ENCODE measurements at regions of chr2 and their contacts with region 1.

Region 1: DNA sequence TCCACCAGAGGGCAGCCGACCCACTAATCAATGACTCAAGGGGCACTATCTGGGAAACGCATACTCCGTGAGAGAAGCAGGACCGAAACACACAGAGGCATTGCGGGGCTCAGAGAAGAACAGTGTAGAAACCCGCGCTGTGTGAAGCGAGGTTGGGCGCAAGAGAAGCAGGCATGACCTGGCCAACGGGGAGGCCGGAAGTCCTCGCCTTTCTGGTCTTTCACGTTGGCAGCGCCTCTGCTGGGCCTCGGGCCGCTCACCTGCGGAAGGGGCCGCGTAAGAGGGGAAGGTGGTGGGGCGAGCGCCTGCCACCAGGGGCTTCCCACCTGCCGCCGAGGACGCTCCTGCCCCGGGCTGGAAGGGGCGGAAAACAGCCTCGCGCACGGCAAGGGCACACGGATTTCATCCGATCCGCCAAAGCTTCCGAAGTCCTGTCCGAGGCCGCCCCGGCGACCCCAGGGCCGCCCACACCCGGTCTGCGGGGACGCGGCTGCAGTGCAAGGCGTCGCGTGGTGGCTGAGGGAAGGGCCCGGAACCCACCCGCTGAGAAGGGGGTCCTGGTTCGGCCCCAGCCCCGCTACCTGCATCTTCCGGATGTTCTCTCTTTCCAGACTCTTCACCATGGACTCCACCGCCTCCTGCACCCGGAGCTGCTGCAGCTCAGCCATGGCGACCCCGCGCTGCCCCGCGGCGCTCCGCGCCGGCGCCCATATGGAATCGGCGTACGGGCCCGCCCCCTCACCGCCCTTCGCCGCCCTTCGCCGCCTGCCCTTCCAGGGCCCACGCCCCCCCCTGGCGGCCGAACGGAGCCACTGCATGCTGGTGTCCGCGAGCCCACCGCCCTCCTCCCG is at the start of gene FAM136A:
- DNase-seq: peak; percentile 78 to 89
- ATAC-seq: peak; percentile 86 to 94
- H3K4me3 ChIP-seq: peak within 1 kb of the TSS; percentile 95
- H3K27ac ChIP-seq: peak within 1 kb of the TSS; percentile 95 to 96
- H3K4me1 ChIP-seq: peaks cover 6% of the 10 kb centered on the region
- CTCF ChIP-seq: peak; percentile 75
- EP300 ChIP-seq: no peak
- POLR2A ChIP-seq: peak; percentile 96
- RAD21 ChIP-seq: peak; percentile 47 to 55; a peak in 4 of 5 replicates
- polyA plus RNA-seq, gene FAM136A: 88.5 and 117 TPM in 2 replicates

Region 2: DNA sequence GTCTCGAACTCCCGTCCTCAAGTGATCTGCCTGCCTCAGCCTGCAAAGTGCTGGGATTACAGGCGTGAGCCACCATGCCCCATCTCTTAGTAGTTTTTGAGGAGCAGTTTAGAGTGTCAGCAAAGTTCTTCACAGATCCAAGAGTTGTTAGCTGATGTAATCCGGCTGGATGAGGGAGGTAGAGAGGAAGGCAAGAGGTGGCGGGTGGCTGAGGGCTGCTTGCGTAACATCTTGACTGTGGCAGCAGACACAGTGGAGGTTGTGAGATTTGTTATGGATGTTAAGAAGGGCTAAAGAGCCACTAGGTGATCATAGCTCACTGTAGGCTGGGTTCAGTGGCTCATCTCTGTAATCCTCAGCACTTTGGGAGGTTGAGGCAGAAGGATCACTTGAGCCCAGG is 19.8 kb after region 1 on chr2:
- CTCF ChIA-PET with region 1: interaction called, 155 read pairs
- POLR2A ChIA-PET with region 1: no interaction called
- DNase-seq: no peak
- ATAC-seq: no peak
- H3K4me3 ChIP-seq: no peak overlapping the region
- H3K27ac ChIP-seq: no peak overlapping the region
- H3K4me1 ChIP-seq: no peaks in the 10 kb centered on the region
- CTCF ChIP-seq: no peak
- EP300 ChIP-seq: no peak
- POLR2A ChIP-seq: no peak
- RAD21 ChIP-seq: no peak

Region 3: DNA sequence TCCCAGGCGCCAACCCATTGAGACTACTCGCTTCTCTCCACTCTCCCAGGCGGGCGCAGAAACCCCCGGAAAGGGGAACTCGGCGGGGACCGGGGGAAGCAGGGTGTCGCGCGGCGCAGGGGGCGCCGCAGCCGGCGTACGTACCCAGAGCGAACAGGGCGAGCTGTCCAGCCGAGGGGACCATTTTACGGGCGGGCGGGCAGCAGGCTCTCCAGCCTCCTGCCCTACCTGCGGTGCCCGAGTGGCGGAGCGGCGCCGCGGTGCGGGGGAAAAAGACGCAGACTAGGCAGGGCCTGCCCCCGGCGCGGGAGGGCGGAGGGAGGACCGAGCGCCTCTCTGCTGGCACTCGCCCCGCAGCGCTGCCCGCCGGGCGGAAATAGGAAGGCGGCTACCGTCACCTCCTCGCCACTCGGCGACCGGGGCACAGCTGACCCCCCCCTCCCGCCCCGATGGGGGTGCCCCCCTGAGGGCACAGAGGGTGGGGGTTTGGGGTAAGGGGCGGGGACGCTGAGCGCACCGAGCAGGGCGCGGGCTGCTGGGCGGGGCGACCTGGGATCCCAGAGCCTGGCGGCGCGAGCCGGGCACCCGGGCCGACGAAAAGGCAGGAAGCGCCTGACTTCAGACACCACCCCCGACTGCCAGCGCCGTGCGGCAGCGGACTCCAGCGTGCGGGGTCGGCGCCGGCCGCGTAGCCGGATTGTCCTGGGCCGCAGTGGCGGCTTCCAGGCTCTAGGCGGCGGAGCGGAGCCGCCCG is 252.2 kb after region 1 on chr2 and contains the start of gene TGFA:
- CTCF ChIA-PET with region 1: interaction called, 20 read pairs
- POLR2A ChIA-PET with region 1: no interaction called
- DNase-seq: peak; percentile 68 to 82
- ATAC-seq: peak; percentile 87 to 93
- H3K4me3 ChIP-seq: peak within 1 kb of the TSS; percentile 59
- H3K27ac ChIP-seq: peak within 1 kb of the TSS; percentile 75 to 86
- H3K4me1 ChIP-seq: peaks cover 12% of the 10 kb centered on the region; the same call in 2 of the 3 replicates
- CTCF ChIP-seq: peak; percentile 65
- EP300 ChIP-seq: peak in 1 of 2 experiments; percentile 9; a peak in 1 of 5 replicates
- POLR2A ChIP-seq: peak; percentile 51
- RAD21 ChIP-seq: peak; percentile 52 to 66
- polyA plus RNA-seq, gene TGFA: 3.5 and 3.6 TPM in 2 replicates

Region 4: GRCh38 chr2:70647873-70648481 is 346.4 kb after region 1 on chr2:
- CTCF ChIA-PET with region 1: interaction called, 322 read pairs
- POLR2A ChIA-PET with region 1: interaction called, 4 read pairs
- DNase-seq: peak; percentile 48 to 72
- ATAC-seq: peak; percentile 73 to 88
- H3K4me3 ChIP-seq: no peak overlapping the region
- H3K27ac ChIP-seq: no peak overlapping the region
- H3K4me1 ChIP-seq: no peaks in the 10 kb centered on the region
- CTCF ChIP-seq: peak; percentile 98
- EP300 ChIP-seq: no peak
- POLR2A ChIP-seq: no peak
- RAD21 ChIP-seq: peak; percentile 97 to 99

Region 5: GRCh38 chr2:70767699-70768589 is 466.4 kb after region 1 on chr2 and contains the start of gene ADD2:
- CTCF ChIA-PET with region 1: interaction called, 16 read pairs
- POLR2A ChIA-PET with region 1: interaction called, 4 read pairs
- DNase-seq: peak; percentile 76 to 81
- ATAC-seq: peak; percentile 86 to 94
- H3K4me3 ChIP-seq: peak within 1 kb of the TSS; percentile 68
- H3K27ac ChIP-seq: peak within 1 kb of the TSS; percentile 77 to 92
- H3K4me1 ChIP-seq: peaks cover 11% of the 10 kb centered on the region
- CTCF ChIP-seq: peak; percentile 97
- EP300 ChIP-seq: no peak
- POLR2A ChIP-seq: peak; percentile 81
- RAD21 ChIP-seq: peak; percentile 31 to 68; a peak in 4 of 5 replicates
- polyA plus RNA-seq, gene ADD2: 25.5 and 28.4 TPM in 2 replicates

Region 6: GRCh38 chr2:70871398-70872211 is 570.0 kb after region 1 on chr2:
- CTCF ChIA-PET with region 1: interaction called, 14 read pairs
- POLR2A ChIA-PET with region 1: no interaction called
- DNase-seq: peak; percentile 84 to 88
- ATAC-seq: peak; percentile 97 to 99
- H3K4me3 ChIP-seq: peak overlapping the region; percentile 32
- H3K27ac ChIP-seq: no peak overlapping the region
- H3K4me1 ChIP-seq: peaks cover 5% of the 10 kb centered on the region; the same call in 2 of the 3 replicates
- CTCF ChIP-seq: peak; percentile 98
- EP300 ChIP-seq: no peak
- POLR2A ChIP-seq: no peak
- RAD21 ChIP-seq: peak; percentile 97 to 98